WTC11 (cell line): ENCODE measurements at regions of chr6 and their contacts with region 1.

Region 1: DNA sequence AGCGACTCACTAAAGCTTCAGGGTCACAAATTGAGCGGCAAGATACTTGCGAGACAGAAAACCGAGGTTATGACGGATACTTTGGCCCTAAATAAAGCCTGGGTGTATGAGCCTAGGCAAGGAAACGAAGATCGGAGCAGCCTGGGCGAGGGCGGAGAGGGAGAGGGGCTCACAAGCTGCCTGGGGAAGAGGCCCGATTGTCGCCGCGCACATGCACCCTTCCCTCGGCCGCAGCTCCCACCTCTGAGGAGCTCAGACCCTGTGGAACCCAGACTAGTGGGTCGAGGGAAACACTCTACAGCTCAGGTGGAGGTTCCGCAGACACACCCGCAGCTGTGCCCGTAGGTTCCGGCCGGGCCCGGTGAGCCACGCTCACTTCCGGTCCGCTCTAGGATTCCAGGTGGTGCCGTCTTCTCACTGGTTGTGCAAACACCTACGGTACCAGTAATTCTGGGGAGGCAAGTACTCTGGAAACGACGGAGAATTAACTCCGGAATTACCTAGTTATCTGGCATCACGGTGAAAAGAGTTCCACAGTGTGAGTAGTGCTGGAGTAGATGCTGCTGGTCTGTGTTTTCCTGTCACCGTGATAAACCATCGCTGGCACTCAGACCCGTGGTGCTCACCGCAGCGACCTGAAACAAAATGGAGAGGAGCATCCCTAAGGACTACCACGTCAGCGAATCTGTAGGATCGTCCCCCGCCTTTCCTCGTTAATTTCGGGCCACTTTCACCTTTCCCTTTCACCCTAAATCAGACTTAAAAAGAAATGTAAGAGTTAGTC is 61.5 kb downstream of the GPX5 start:
- DNase-seq: peak; percentile 84
- ATAC-seq: peak; percentile 70
- H3K4me3 Mint-ChIP-seq: peak overlapping the region; percentile 91
- H3K27ac Mint-ChIP-seq: peak overlapping the region; percentile 95
- H3K4me1 Mint-ChIP-seq: peaks cover 41% of the 10 kb centered on the region
- H3K27me3 Mint-ChIP-seq: peaks cover 21% of the 10 kb centered on the region
- CTCF ChIP-seq: no peak

Region 2: GRCh38 chr6:27871924-27872638 is 715.1 kb before region 1 on chr6:
- CTCF ChIA-PET with region 1: no interaction called
- POLR2A ChIA-PET with region 1: interaction called, 10 read pairs
- DNase-seq: peak; percentile 79
- ATAC-seq: peak; percentile 58
- H3K4me3 Mint-ChIP-seq: peak overlapping the region; percentile 94
- H3K27ac Mint-ChIP-seq: peak overlapping the region; percentile 99
- H3K4me1 Mint-ChIP-seq: peaks cover 50% of the 10 kb centered on the region
- H3K27me3 Mint-ChIP-seq: no peaks in the 10 kb centered on the region
- CTCF ChIP-seq: no peak

Region 3: GRCh38 chr6:28531479-28532128 is 55.5 kb before region 1 on chr6:
- CTCF ChIA-PET with region 1: interaction called, 25 read pairs
- POLR2A ChIA-PET with region 1: no interaction called
- DNase-seq: no peak
- ATAC-seq: peak; percentile 89
- H3K4me3 Mint-ChIP-seq: 0 out of 2 replicates have a peak overlapping the region, but pooled peaks have one; percentile 4
- H3K27ac Mint-ChIP-seq: peak overlapping the region; percentile 65; the same call in 1 of the 2 replicates
- H3K4me1 Mint-ChIP-seq: peaks cover 23% of the 10 kb centered on the region
- H3K27me3 Mint-ChIP-seq: peaks cover 7% of the 10 kb centered on the region
- CTCF ChIP-seq: no peak

Region 4: GRCh38 chr6:28606424-28607400 is 19.6 kb after region 1 on chr6:
- CTCF ChIA-PET with region 1: interaction called, 12 read pairs
- POLR2A ChIA-PET with region 1: no interaction called
- DNase-seq: peak; percentile 72
- ATAC-seq: peak; percentile 93
- H3K4me3 Mint-ChIP-seq: peak overlapping the region; percentile 82
- H3K27ac Mint-ChIP-seq: no peak overlapping the region
- H3K4me1 Mint-ChIP-seq: peaks cover 6% of the 10 kb centered on the region
- H3K27me3 Mint-ChIP-seq: peaks cover 10% of the 10 kb centered on the region
- CTCF ChIP-seq: no peak